Caco-2 (cell line): ENCODE measurements at regions of chr3 and their contacts with region 1.

Region 1: GRCh38 chr3:9503283-9503682 is 50.3 kb downstream of the LHFPL4 start:
- DNase-seq: peak; percentile 79 to 83
- H3K4me3 ChIP-seq: no peak overlapping the region
- H3K4me3 Mint-ChIP-seq: no peak overlapping the region
- H3K27ac Mint-ChIP-seq: no peak overlapping the region
- H3K4me1 ChIP-seq: no peaks in the 10 kb centered on the region
- H3K4me1 Mint-ChIP-seq: no peaks in the 10 kb centered on the region
- H3K27me3 ChIP-seq: no peaks in the 10 kb centered on the region
- H3K27me3 Mint-ChIP-seq: peaks cover 8% of the 10 kb centered on the region
- CTCF ChIP-seq: peak; percentile 86 to 92

Region 2: GRCh38 chr3:9669720-9670432 is 166.6 kb after region 1 on chr3:
- CTCF ChIA-PET with region 1: interaction called, 3 read pairs
- POLR2A ChIA-PET with region 1: no interaction called
- intact Hi-C with region 1: loop called (anchors 5 kb)
- DNase-seq: no peak
- H3K4me3 ChIP-seq: no peak overlapping the region
- H3K4me3 Mint-ChIP-seq: no peak overlapping the region
- H3K27ac Mint-ChIP-seq: peak overlapping the region; percentile 29
- H3K4me1 ChIP-seq: no peaks in the 10 kb centered on the region
- H3K4me1 Mint-ChIP-seq: no peaks in the 10 kb centered on the region
- H3K27me3 ChIP-seq: no peaks in the 10 kb centered on the region
- H3K27me3 Mint-ChIP-seq: no peaks in the 10 kb centered on the region
- CTCF ChIP-seq: no peak

Region 3: GRCh38 chr3:9704347-9705322 is 201.4 kb after region 1 on chr3:
- CTCF ChIA-PET with region 1: no interaction called
- POLR2A ChIA-PET with region 1: no interaction called
- intact Hi-C with region 1: loop called (anchors 10 kb)
- DNase-seq: peak; percentile 69 to 77
- H3K4me3 ChIP-seq: peak overlapping the region; percentile 53
- H3K4me3 Mint-ChIP-seq: peak overlapping the region; percentile 78
- H3K27ac Mint-ChIP-seq: no peak overlapping the region
- H3K4me1 ChIP-seq: 0 out of 2 replicates have a peak, but pooled peaks cover 5% of the 10 kb centered on the region
- H3K4me1 Mint-ChIP-seq: no peaks in the 10 kb centered on the region
- H3K27me3 ChIP-seq: no peaks in the 10 kb centered on the region; the same call in 1 of the 2 replicates
- H3K27me3 Mint-ChIP-seq: peaks cover 15% of the 10 kb centered on the region
- CTCF ChIP-seq: no peak

Region 4: DNA sequence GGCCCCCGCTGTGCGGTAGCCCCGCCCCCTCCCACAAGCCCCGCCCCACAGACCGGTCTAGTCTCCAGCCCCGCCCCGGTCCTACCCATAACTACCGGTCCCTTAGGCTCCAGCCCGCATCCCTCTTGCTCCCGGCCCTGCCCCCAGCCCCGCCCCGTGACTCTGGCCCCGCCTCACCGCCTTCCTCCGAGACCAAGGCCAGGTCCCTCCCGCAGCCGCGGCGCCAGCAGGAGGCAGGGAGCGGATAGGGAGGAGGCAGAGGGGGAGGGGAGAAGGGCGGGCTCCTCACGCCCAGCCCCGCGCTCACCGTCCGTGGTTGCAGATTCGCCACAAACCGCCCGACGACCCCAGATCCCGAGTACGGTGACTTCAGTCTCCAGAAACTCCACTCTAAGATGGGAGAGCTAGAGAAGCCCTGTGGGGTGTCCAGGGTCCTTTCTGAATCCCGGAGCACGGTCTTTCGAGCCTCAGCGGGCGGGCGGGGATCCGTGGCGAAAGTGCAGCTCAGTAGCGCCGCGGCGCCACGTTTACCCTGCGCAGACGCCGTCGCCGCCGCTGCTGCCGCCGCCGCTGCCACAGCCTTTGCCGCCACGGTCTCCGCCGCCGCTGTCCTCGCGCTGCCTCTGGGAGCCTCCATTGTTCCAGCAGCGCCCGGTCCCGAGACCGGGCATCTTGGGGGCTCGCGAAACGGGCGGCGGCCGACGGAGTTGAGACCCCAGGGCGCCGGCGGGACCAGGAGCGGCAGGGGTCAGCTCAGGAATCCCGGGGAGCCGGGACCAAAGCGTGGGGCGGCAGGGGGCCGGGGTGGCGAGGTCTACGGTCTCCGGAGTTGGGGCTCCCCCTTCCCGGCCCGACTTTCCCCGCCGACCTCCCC is 228.2 kb after region 1 on chr3 and contains the start of gene BRPF1:
- CTCF ChIA-PET with region 1: interaction called, 3 read pairs
- POLR2A ChIA-PET with region 1: no interaction called
- intact Hi-C with region 1: loop called (anchors 2 kb)
- DNase-seq: peak; percentile 98 to 99
- H3K4me3 ChIP-seq: peak within 1 kb of the TSS; percentile 85
- H3K4me3 Mint-ChIP-seq: peak within 1 kb of the TSS; percentile 84
- H3K27ac Mint-ChIP-seq: peak within 1 kb of the TSS; percentile 83
- H3K4me1 ChIP-seq: peaks cover 7% of the 10 kb centered on the region; the same call in 1 of the 2 replicates
- H3K4me1 Mint-ChIP-seq: peaks cover 23% of the 10 kb centered on the region
- H3K27me3 ChIP-seq: no peaks in the 10 kb centered on the region
- H3K27me3 Mint-ChIP-seq: no peaks in the 10 kb centered on the region
- CTCF ChIP-seq: no peak
- total RNA-seq, gene BRPF1: 24.7 and 26.0 TPM in 2 replicates

Region 5: GRCh38 chr3:9809615-9810432 is 306.5 kb after region 1 on chr3 and contains the start of gene TTLL3:
- CTCF ChIA-PET with region 1: no interaction called
- POLR2A ChIA-PET with region 1: no interaction called
- intact Hi-C with region 1: loop called (anchors 1 kb)
- DNase-seq: peak; percentile 65 to 71
- H3K4me3 ChIP-seq: peak within 1 kb of the TSS; percentile 61
- H3K4me3 Mint-ChIP-seq: peak within 1 kb of the TSS; percentile 47
- H3K27ac Mint-ChIP-seq: peak within 1 kb of the TSS; percentile 87
- H3K4me1 ChIP-seq: peaks cover 12% of the 10 kb centered on the region
- H3K4me1 Mint-ChIP-seq: peaks cover 6% of the 10 kb centered on the region
- H3K27me3 ChIP-seq: no peaks in the 10 kb centered on the region
- H3K27me3 Mint-ChIP-seq: no peaks in the 10 kb centered on the region
- CTCF ChIP-seq: no peak
- total RNA-seq, gene TTLL3: 10.3 and 13.3 TPM in 2 replicates